ENCODE measurements at regions of chr5 and their contacts with region 1.

Region 1: DNA sequence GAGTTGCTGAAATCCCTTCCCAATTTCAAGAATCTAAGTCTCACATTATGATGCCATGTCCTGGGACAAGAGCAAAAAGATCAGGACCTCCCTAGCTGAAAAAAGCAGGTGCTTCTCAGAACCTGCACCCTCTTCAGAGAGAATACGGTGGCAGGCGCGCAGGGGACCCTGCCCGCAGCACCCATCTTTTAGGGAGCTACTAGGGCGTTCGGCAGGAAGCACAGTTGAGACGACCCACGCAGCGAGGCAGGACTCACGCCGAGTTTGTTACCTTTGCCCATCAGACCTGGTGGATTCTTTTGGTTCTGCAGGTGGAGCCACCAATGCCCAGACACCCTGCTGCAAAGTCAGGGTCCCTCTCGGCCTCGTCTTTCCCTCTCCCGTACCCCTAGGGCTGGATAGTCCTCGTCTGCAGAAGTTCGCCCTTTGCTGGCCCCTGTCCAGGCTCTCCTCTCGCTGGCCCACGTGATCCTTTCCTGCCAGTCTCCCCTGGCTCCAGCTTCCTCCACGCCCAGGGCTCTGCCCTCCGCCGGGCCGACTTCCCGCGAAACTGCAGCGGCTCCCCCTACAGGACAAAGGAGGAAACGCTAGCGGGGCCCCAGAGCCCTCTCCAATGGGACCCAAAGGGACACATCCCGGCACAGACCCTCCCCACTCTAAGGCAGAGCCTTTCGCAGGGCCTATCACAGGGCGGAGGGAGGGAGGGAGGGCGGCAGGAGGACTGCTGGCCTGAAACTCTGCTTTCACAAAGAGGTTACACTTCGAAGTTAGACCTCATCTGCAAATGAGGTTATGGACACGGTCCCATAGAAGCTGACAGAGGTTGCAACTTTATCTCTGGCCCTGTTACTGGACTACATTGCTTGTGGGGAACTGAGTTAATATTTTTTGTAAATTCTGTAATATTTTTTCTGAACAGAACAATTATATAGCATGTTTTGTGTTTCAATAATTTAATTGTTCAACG is 28.8 kb downstream of the TMEM174 start:
- DNase-seq: no peak
- H3K4me3 ChIP-seq: peak overlapping the region; percentile 8; the same call in 1 of the 2 replicates
- CTCF ChIP-seq: peak; percentile 91

Region 2: DNA sequence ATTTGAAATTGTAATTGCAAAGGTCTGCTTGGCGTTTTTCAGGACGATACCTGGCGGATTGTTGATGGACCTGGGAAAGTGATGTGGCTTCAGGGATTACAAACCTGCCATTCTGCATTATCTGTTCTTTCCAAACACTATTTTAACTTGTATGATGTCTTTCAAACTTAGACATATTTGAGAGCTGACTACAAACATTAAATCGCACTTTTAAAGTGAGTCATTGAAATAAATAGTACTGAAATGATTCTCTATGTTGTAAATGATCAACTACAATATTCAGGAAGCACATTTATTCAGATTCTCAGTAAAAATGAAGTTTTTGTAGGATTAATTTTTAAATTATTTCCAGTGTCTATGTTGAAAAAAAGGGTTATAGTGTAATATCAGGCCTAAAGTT is 113.8 kb before region 1 on chr5:
- CTCF ChIA-PET with region 1: interaction called, 47 read pairs
- POLR2A ChIA-PET with region 1: no interaction called
- DNase-seq: no peak
- H3K4me3 ChIP-seq: no peak overlapping the region
- CTCF ChIP-seq: no peak

Region 3: DNA sequence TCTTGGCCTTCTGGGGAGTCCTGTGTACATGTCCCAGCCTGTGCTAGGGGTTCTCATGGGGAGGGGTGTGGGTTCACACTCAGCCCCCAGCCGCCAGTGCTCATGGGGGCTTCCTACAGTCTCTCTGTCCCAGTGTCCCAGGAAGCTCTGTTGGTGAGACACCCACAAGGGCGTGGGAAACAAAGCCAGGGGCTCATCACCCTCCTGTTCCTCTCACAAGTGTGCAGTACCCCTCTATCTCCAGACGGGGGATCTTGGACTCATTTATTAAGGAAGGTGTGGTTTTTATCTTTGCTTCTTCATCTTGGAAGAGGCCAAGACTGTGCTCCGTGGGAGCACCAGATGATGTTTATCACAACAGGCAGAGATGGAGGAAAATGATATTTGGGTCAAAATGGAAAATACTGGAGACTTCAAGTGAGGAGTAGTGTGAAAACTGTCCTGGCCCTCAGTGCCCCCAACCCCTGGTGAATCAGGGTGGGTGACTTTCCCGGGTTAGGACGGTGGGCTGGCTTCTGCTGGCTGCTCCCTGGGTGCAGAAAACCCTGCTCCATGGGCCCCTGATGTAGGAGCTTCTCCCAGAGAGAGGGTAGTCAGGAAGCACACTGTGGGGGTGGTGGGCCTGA is 66.3 kb before region 1 on chr5:
- CTCF ChIA-PET with region 1: interaction called, 18 read pairs
- POLR2A ChIA-PET with region 1: no interaction called
- DNase-seq: no peak
- H3K4me3 ChIP-seq: no peak overlapping the region
- CTCF ChIP-seq: peak; percentile 54

Region 4: GRCh38 chr5:73189871-73190376 is 11.9 kb before region 1 on chr5:
- CTCF ChIA-PET with region 1: interaction called, 68 read pairs
- POLR2A ChIA-PET with region 1: no interaction called
- DNase-seq: peak; percentile 55
- H3K4me3 ChIP-seq: no peak overlapping the region
- CTCF ChIP-seq: no peak

Region 5: GRCh38 chr5:73233347-73234200 is 31.7 kb after region 1 on chr5:
- CTCF ChIA-PET with region 1: interaction called, 16 read pairs
- POLR2A ChIA-PET with region 1: no interaction called
- DNase-seq: no peak
- H3K4me3 ChIP-seq: no peak overlapping the region
- CTCF ChIP-seq: peak; percentile 34